ENCODE measurements at regions of chr3 and their contacts with region 1.

Region 1: DNA sequence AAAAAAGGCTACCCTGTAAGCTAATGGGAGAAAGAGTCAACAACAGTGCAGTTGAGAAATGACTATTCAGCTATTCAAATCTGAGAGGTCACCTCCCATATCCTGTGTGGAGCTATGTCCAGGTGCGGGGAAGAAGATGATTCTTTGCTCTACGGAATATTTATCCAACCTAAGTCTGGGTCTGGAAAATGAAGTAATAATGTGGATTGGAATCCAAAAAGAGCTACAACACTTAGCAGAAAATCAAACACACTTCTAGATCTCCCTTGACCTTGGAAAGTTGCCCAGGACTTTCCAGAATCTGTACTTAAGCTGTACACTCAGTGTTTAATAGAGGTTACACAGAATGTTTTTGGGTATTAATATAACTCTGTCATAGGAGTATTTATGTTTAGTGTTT is 251.9 kb downstream of the NAALADL2 start:
- DNase-seq: no peak
- H3K4me3 ChIP-seq: no peak overlapping the region
- H3K27ac ChIP-seq: no peak overlapping the region
- H3K4me1 ChIP-seq: no peaks in the 10 kb centered on the region
- H3K27me3 ChIP-seq: no peaks in the 10 kb centered on the region
- CTCF ChIP-seq: no peak

Region 2: DNA sequence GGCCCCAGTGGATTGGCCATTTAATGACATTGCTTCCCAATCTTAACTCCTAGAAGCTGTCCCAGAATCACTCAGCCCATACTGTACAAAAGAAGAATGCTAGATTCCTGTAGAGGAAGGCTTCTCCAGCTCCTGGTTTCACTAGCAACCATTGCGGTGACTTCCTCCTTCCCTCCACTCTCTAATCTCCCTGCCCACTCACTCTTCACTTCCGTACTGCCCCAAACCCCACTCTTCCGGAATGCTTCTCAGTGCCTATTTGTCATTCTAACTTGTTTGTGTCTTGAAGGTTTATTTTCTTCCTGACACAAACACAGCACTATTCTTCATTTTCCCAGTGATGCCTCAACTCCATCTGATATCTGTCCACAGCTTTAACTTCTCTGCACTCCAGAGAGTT is 1872.9 kb before region 1 on chr3:
- CTCF ChIA-PET with region 1: no interaction called
- POLR2A ChIA-PET with region 1: no interaction called
- intact Hi-C with region 1: no loop called
- DNase-seq: no peak
- H3K4me3 ChIP-seq: no peak overlapping the region
- H3K27ac ChIP-seq: no peak overlapping the region
- H3K4me1 ChIP-seq: no peaks in the 10 kb centered on the region
- H3K27me3 ChIP-seq: no peaks in the 10 kb centered on the region
- CTCF ChIP-seq: no peak

Region 3: DNA sequence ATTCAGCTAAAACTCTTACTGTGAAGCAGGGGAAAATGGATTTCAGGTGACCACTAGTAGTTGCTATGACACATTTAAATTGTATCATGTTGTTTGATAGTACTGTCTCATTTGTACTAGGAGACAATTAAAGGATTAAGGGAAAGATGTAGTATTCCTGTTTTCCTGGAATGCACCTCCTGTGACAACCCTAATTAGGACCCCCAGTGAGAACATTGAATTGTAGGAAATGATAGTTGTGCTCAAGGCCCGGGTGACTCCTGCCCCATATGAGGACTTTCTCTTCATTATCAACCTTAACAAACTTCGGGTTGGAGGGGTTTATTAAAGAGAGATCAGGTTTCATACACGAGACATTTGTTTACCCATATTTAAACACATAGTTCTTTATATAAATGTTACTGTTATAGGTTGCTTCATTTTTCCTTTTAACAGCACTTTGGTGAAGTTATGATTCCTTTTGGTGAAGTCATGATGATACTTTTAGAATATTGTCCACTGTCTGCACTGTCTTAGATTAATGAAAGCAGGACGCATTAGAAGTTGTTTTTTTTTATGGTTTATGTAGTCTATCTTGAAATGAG is 644.5 kb before region 1 on chr3:
- CTCF ChIA-PET with region 1: no interaction called
- POLR2A ChIA-PET with region 1: interaction called, 13 read pairs
- intact Hi-C with region 1: no loop called
- DNase-seq: no peak
- H3K4me3 ChIP-seq: no peak overlapping the region
- H3K27ac ChIP-seq: no peak overlapping the region
- H3K4me1 ChIP-seq: no peaks in the 10 kb centered on the region
- H3K27me3 ChIP-seq: no peaks in the 10 kb centered on the region
- CTCF ChIP-seq: no peak

Region 4: GRCh38 chr3:175029828-175030227 is 81.2 kb before region 1 on chr3:
- CTCF ChIA-PET with region 1: no interaction called
- POLR2A ChIA-PET with region 1: no interaction called
- intact Hi-C with region 1: no loop called
- DNase-seq: no peak
- H3K4me3 ChIP-seq: no peak overlapping the region
- H3K27ac ChIP-seq: no peak overlapping the region
- H3K4me1 ChIP-seq: no peaks in the 10 kb centered on the region
- H3K27me3 ChIP-seq: no peaks in the 10 kb centered on the region
- CTCF ChIP-seq: no peak

Region 5: GRCh38 chr3:175121225-175121624 is 10.2 kb after region 1 on chr3:
- CTCF ChIA-PET with region 1: no interaction called
- POLR2A ChIA-PET with region 1: interaction called, 12 read pairs
- intact Hi-C with region 1: no loop called
- DNase-seq: peak in 1 of 2 experiments; percentile 16
- H3K4me3 ChIP-seq: no peak overlapping the region
- H3K27ac ChIP-seq: no peak overlapping the region
- H3K4me1 ChIP-seq: no peaks in the 10 kb centered on the region
- H3K27me3 ChIP-seq: no peaks in the 10 kb centered on the region
- CTCF ChIP-seq: peak; percentile 76